ENCODE measurements at regions of chr2 and their contacts with region 1.

Region 1: DNA sequence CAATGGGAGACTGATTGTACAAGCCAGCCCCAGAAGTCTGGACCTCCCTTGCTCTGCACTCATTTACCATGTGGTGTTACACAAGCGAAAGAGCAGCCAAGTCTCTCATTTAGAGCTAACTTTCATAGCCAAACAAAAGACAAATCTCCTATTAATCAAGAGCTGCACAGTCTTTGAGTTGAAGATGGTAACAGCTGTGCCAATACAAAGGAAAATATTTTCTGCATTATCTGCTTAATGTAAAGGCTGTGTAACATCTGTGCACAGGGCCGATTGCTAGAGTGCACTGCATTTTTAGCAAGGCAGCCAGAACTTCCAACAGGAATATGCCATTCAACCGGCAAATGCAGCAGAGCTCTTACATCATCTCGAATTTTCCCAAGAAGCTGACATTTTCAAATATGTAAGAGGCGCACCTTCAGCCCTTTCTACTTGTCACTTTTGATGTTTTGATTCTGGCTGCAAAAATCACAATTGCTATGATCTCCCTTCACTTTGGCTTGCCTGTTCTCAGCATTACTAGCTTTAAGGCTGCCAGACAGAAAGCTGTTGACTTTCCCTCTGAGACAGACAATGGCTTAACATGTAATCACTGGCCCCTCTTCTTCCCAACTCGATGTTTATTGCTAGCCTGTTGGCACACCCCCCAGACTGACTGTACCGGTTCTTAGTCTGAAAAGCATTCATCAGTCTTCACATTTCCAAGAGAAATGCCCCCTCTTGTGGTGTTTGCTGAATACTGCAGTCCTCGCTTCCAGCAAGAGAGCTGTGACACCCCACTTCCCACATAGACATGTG is 96.9 kb upstream of the TANK start:
- DNase-seq: peak; percentile 89
- H3K4me3 ChIP-seq: no peak overlapping the region
- H3K27ac ChIP-seq: no peak overlapping the region
- H3K4me1 ChIP-seq: peaks cover 4% of the 10 kb centered on the region
- H3K27me3 ChIP-seq: no peaks in the 10 kb centered on the region
- CTCF ChIP-seq: peak; percentile 79 to 91
- POLR2A ChIP-seq: no peak

Region 2: DNA sequence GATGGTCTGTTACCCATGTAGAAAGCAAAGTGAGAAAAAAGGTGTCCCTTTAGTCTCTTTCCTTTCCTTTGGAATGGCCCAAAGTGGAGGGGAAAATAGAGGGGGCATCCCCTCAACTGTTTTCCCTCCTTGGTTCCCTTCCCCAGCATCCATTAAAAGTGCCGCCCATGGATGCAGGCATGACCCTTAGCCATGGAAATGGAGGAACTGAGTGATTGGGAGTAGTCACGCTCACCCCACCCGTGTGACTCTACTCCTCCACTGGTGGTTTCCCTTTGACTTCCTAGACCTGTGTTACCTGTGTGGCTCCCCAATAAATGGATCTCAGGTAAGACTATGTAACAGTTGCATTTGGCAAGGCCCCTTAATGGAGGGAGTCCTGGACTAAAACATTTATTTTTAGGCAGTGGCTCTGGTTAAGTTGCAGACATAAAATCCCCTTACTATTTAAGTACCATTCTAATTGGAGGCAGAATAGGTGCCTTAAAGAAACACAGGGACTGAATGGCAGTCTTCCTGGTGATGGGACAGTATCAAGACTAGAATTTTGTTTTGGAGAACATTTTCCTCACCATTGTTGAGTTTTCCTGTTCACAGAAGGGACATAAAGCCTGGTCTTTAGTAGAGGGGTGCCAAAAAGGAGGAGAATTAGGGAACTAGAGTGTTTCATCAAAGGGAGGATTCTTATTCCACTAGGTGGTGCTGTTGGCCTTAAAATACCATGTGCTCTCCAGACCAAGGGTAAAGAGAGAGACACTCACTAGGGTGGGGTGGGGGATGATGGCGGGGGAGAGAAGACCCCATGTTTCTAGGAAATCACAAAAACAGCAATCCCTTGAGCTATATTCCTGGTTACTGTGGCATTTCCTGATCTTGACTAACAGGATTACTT is 975.3 kb before region 1 on chr2:
- CTCF ChIA-PET with region 1: interaction called, 25 read pairs
- POLR2A ChIA-PET with region 1: no interaction called
- dilution Hi-C with region 1: no loop called
- intact Hi-C with region 1: no loop called
- DNase-seq: no peak
- H3K4me3 ChIP-seq: no peak overlapping the region
- H3K27ac ChIP-seq: no peak overlapping the region
- H3K4me1 ChIP-seq: no peaks in the 10 kb centered on the region
- H3K27me3 ChIP-seq: no peaks in the 10 kb centered on the region
- CTCF ChIP-seq: peak; percentile 4 to 21
- POLR2A ChIP-seq: no peak

Region 3: DNA sequence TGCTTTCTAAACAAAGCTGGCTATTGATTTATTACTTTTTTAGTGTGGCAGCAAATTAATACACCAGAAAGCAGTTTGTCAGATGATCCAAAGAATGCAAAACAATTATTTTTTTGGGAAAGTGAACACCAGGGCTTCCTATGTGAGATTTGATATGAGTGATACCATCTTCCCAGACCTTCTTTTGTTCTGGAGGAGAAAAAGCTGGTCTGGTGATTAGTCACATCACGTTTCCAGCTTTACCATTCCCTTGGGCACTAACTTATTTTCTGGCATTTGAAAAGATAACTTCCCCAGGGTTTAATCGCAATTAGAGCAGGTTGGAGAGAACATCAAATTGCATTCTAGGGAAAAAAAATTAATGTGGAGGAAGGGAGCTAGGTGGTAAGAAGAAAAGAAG is 86.0 kb before region 1 on chr2:
- CTCF ChIA-PET with region 1: interaction called, 10 read pairs
- POLR2A ChIA-PET with region 1: no interaction called
- dilution Hi-C with region 1: no loop called
- intact Hi-C with region 1: no loop called
- DNase-seq: no peak
- H3K4me3 ChIP-seq: no peak overlapping the region
- H3K27ac ChIP-seq: no peak overlapping the region
- H3K4me1 ChIP-seq: no peaks in the 10 kb centered on the region
- H3K27me3 ChIP-seq: no peaks in the 10 kb centered on the region
- CTCF ChIP-seq: no peak
- POLR2A ChIP-seq: no peak

Region 4: DNA sequence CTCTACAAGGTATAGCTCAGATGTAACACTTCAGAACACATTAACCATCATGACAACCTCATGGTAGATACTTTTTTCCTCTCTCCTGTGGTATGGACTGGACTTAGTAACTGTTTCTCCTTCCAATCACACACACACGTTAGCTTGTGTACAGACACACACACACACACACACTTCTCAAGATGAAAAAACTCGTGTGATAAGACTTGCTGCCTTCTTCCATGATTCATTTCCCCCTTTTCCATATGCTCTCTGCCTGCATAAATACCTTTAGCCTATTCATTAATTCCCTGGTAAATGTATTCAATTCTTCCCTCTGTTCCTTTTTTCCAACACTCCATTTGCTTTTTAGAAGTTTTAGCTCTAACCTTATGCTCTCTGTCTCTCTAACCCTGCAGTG is 22.0 kb before region 1 on chr2:
- CTCF ChIA-PET with region 1: interaction called, 11 read pairs
- POLR2A ChIA-PET with region 1: no interaction called
- dilution Hi-C with region 1: no loop called
- intact Hi-C with region 1: no loop called
- DNase-seq: peak; percentile 43
- H3K4me3 ChIP-seq: no peak overlapping the region
- H3K27ac ChIP-seq: no peak overlapping the region
- H3K4me1 ChIP-seq: no peaks in the 10 kb centered on the region
- H3K27me3 ChIP-seq: peaks cover 14 to 23% of the 10 kb centered on the region in 2 experiments
- CTCF ChIP-seq: no peak
- POLR2A ChIP-seq: no peak

Region 5: GRCh38 chr2:161090411-161090810 is 27.1 kb after region 1 on chr2:
- CTCF ChIA-PET with region 1: interaction called, 16 read pairs
- POLR2A ChIA-PET with region 1: no interaction called
- dilution Hi-C with region 1: no loop called
- intact Hi-C with region 1: no loop called
- DNase-seq: peak; percentile 90
- H3K4me3 ChIP-seq: no peak overlapping the region
- H3K27ac ChIP-seq: peak overlapping the region; percentile 29
- H3K4me1 ChIP-seq: peaks cover 15% of the 10 kb centered on the region
- H3K27me3 ChIP-seq: no peaks in the 10 kb centered on the region
- CTCF ChIP-seq: no peak
- POLR2A ChIP-seq: no peak

Region 6: DNA sequence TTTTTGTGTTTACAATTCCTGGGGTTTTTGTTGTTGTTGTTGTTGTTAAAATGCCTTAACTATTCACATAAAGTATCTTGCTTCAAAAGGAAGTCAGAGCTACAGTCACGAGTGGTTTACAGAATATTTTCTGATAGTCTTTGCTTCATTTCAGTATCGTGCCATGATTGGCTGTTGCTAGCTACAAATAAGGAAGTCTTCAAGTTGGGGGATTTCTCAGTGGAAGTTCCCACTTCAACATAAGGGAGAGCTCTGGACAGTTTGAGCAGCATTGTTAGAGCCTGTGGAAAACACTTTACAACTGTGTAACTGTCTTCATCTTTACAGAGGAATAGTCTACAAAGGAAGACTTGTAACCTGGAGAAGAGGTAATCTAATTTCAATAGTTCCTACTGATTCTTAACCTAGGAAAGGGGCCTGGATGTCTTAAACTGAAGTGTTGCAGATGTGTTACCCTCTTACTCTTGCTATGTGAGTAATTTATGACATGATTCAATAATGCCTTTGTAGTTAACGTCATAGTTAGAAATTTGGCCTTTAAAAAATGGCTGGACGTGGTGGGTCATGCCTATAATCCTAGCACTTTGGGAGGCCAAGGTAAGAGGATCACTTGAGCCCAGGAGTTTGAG is 73.5 kb after region 1 on chr2:
- CTCF ChIA-PET with region 1: interaction called, 37 read pairs
- POLR2A ChIA-PET with region 1: no interaction called
- dilution Hi-C with region 1: no loop called
- intact Hi-C with region 1: no loop called
- DNase-seq: peak; percentile 90
- H3K4me3 ChIP-seq: peak overlapping the region in 2 of 3 experiments; percentile 32 to 78
- H3K27ac ChIP-seq: peak overlapping the region; percentile 88
- H3K4me1 ChIP-seq: peaks cover 45% of the 10 kb centered on the region
- H3K27me3 ChIP-seq: no peaks in the 10 kb centered on the region
- CTCF ChIP-seq: no peak
- POLR2A ChIP-seq: peak; percentile 59

Region 7: DNA sequence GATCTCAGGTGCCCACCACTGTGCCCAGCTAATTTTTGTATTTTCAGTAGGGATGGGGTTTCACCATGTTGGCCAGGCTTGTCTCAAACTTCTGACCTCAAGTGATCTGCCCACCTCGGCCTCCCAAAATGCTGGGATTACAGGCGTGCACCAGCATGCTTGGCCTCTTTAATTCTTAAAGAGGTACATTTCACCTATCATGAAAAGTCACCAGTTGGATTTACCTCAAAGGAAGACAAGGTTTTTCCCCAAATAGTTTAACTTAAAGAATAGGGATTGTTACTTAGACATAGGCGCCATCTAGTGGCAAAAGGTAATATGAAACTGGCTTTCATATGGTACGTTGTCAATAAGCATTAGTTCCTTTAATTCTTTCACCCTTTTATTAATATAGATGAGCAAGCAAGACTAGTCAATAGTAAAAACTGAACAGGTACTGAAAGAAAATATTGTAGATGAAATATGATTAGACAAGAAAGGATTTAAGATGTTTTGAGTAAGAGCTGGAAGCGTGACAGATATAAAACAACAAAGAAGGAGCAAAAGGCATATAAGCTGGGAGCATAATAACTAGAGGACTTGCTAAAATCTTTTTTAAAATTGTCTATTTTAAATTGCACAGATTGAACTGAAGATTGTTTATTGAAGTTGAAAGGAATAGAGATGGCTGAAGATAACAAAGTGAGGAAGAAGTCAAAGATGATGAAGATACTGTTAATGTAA is 209.8 kb after region 1 on chr2:
- CTCF ChIA-PET with region 1: interaction called, 25 read pairs
- POLR2A ChIA-PET with region 1: no interaction called
- dilution Hi-C with region 1: no loop called
- intact Hi-C with region 1: loop called (anchors 5 kb)
- DNase-seq: peak; percentile 72
- H3K4me3 ChIP-seq: no peak overlapping the region
- H3K27ac ChIP-seq: no peak overlapping the region
- H3K4me1 ChIP-seq: no peaks in the 10 kb centered on the region
- H3K27me3 ChIP-seq: no peaks in the 10 kb centered on the region
- CTCF ChIP-seq: peak; percentile 44 to 56
- POLR2A ChIP-seq: no peak

Region 8: DNA sequence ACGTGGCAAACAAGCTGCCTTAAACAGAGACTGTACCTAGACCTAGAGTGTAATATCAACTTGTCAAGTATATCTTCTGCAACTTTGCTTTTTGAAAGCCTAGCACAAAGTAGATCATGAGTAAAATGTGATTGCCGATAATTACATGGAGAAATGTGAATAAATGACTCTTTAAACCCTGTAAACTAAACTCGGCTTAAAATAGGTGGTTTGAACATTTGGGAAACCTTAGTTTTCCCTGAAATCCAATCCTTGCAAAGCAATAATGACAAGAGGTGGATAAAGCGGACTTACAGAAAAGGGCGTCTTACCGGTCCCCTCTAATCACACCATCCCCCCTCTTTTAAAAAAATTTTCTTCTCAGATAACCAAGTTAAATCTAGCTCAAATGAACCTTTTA is 244.3 kb after region 1 on chr2:
- CTCF ChIA-PET with region 1: no interaction called
- POLR2A ChIA-PET with region 1: no interaction called
- dilution Hi-C with region 1: no loop called
- intact Hi-C with region 1: no loop called
- DNase-seq: peak; percentile 28
- H3K4me3 ChIP-seq: peak overlapping the region; percentile 58 to 90 (median 77)
- H3K27ac ChIP-seq: peak overlapping the region; percentile 79
- H3K4me1 ChIP-seq: peaks cover 18% of the 10 kb centered on the region
- H3K27me3 ChIP-seq: peaks cover 0 to 6% of the 10 kb centered on the region in 2 experiments
- CTCF ChIP-seq: no peak
- POLR2A ChIP-seq: no peak

Region 9: GRCh38 chr2:161695225-161695624 is 631.9 kb after region 1 on chr2:
- CTCF ChIA-PET with region 1: no interaction called
- POLR2A ChIA-PET with region 1: no interaction called
- dilution Hi-C with region 1: no loop called
- intact Hi-C with region 1: no loop called
- DNase-seq: no peak
- H3K4me3 ChIP-seq: no peak overlapping the region
- H3K27ac ChIP-seq: no peak overlapping the region
- H3K4me1 ChIP-seq: no peaks in the 10 kb centered on the region
- H3K27me3 ChIP-seq: no peaks in the 10 kb centered on the region
- CTCF ChIP-seq: no peak
- POLR2A ChIP-seq: no peak

Measured in endothelial cell of umbilical vein (primary cell).